ENCODE measurements at regions of chr13 and their contacts with region 1.

Region 1: DNA sequence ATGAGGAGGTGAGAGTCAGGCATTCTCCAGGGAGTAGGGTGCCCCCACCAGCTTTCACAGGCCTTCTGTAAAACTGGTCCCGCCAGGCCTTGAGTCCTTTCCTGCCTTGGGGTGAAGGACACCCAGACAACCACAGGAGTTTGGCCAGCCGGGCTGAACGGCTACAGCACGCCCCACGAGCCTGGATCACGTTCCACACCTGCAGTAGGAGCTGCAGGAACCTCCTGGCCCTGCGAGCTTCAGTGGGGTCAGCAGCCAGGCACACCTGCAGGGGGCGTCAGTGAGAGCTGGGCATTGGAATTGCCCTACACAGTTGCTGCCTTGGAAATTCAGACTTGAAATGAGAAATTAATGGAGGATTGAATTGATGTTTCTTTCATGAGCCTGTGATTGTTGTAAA is 45.7 kb downstream of the COL4A2 start:
- DNase-seq: no peak
- H3K4me3 ChIP-seq: no peak overlapping the region
- H3K27ac ChIP-seq: peak overlapping the region; percentile 69 to 87 (median 84)
- H3K4me1 ChIP-seq: peaks cover 24 to 40% (median 29%) of the 10 kb centered on the region in 4 donors
- H3K27me3 ChIP-seq: no peaks in the 10 kb centered on the region
- CTCF ChIP-seq: peak in 4 of 5 experiments; percentile 13 to 25 (median 21)
- EP300 ChIP-seq: no peak
- POLR2A ChIP-seq: no peak

Region 2: GRCh38 chr13:109684824-109685202 is 667.9 kb before region 1 on chr13:
- in situ Hi-C with region 1: no loop called
- intact Hi-C with region 1: loop called (anchors 5 kb)
- DNase-seq: peak; percentile 74
- H3K4me3 ChIP-seq: peak overlapping the region in 1 of 4 donors; percentile 34
- H3K27ac ChIP-seq: peak overlapping the region; percentile 84 to 88 (median 86)
- H3K4me1 ChIP-seq: peaks cover 0 to 55% (median 24%) of the 10 kb centered on the region in 4 donors
- H3K27me3 ChIP-seq: no peaks in the 10 kb centered on the region
- CTCF ChIP-seq: no peak
- EP300 ChIP-seq: no peak
- POLR2A ChIP-seq: peak; percentile 55

Region 3: DNA sequence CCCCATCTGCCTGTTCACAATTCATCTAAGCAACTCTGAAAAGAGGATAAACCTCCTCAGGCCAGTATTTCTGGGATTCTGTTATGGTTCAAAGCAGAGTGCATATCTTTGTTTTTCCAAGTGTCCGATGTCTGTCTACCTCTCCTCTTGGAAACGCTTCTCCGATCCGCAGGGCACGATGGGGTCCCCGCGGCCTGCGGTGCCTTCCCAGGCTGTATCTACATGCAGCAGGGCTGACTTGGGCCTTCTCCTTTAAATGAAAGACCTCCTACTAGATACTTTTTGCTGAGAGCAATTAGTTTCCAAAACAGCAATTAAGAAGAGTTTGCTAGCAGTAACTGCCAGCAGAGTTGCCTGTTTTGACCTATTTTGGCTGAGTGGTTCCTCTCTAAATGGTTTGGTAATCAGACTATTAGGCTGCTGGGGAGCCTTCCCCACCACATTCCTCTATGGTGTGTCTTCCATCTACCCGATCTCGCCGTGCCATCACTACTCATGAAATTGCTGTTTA is 22.2 kb before region 1 on chr13:
- in situ Hi-C with region 1: no loop called
- intact Hi-C with region 1: loop called (anchors 1 kb)
- DNase-seq: no peak
- H3K4me3 ChIP-seq: no peak overlapping the region
- H3K27ac ChIP-seq: peak overlapping the region; percentile 84 to 87 (median 86)
- H3K4me1 ChIP-seq: peaks cover 0 to 34% (median 11%) of the 10 kb centered on the region in 4 donors
- H3K27me3 ChIP-seq: no peaks in the 10 kb centered on the region
- CTCF ChIP-seq: no peak
- EP300 ChIP-seq: no peak
- POLR2A ChIP-seq: no peak

Region 4: DNA sequence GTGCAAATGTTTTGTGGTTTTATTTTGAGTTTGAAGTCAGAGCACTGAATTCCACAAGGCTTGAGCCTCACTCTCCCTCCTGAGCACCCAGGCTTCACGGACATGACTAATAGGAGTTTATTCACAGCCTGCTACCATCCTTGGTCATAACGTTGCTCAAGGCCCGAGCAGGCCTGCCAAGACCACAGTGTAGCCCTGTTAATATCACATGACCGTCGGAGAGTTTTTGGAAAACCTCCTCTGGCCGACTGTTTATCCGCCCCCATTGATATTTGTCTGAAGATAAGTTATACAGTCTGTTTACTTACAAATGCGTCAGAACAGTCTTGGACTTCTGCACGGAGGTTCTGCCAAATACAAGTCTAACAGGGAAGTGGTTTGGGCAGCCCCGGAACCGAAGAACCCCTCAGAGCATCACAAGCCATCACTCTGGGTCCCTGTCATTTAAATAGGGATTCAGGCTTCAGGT is 44.2 kb after region 1 on chr13:
- in situ Hi-C with region 1: no loop called
- intact Hi-C with region 1: loop called (anchors 5 kb)
- DNase-seq: peak; percentile 77
- H3K4me3 ChIP-seq: no peak overlapping the region
- H3K27ac ChIP-seq: peak overlapping the region; percentile 77 to 94 (median 88)
- H3K4me1 ChIP-seq: peaks cover 8 to 40% (median 14%) of the 10 kb centered on the region in 4 donors
- H3K27me3 ChIP-seq: no peaks in the 10 kb centered on the region
- CTCF ChIP-seq: no peak
- EP300 ChIP-seq: peak; percentile 82
- POLR2A ChIP-seq: no peak

Measured in transverse colon (tissue), 4 donors.